Posterior vena cava (tissue), 2 donors: ENCODE measurements at regions of chr12 and their contacts with region 1.

Region 1: DNA sequence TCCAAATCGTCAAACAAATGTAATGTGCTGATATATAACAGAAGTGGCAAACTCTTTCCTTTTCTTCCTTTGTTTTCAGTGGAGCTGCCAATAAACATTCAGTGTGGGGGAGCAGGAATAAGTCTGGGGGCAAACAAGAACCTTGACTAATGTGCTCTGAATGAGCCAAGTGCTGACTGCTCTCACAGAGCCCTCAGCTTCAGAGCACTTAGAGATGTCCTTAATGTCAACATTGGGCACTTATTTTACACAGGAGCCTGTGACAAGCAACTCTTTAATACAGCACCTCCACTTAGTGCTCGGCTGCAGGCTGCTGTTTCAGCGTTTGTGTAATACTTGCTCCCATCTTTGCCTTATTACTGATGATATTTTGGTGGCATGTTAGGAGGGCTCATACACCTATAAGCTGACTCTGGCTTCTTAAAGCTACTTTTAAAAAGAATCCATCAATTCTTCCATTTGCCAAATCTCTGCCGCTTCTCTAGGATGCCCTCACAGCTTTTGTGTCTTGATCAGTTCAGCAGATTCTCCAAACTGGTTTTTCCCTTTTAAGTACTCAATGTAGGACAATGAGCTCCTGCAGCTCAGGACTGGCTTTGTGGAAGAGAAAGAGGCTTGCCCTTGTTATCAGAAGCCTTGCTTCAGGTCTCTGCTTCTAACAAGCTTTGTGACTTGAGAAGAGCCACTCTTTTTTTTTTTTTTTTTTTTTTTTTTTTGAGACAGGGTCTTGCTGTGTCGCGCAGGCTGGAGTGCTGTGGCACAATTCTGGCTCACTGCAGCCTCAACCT is 206.6 kb downstream of the MON2 start:
- DNase-seq: no peak

Region 2: DNA sequence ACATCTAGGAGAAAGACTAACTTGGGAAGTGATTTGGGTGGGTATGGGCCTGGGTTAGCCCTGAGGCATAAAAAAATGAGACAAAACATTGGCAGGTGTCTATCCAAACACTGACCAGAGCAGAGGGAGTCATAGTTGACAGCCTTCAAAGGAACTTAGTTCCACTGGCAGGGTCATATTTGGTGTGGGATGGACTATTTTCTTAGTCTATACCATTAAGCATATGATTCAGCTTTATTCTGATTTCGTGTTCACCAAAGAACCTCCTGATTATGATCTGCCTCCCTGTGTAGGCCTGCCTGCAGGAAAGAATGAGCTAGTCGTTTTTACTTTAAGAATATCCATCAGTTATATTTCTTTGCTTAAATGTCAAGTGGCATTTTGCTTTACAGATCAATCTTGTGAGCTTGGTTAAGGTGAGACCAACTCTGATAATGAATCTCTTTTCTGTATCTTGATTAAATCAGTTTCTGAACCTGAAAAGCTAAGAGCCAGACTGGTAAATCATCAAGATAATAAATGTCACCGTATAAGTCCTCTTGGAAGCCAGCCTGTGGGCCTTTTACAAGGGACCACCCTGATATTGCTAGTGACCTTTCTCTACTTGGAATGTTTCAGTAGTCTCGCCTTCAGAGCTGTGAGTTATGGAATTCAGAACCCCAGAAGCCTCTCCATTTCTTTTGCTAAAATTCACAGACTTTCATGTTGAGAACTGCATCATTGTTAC is 23.6 kb before region 1 on chr12:
- intact Hi-C with region 1: loop called in 1 of 2 experiments (anchors 1 kb)
- DNase-seq: no peak